Right ventricle myocardium inferior (tissue), 1 donor: ENCODE measurements at regions of chr12 and their contacts with region 1.

Region 1: DNA sequence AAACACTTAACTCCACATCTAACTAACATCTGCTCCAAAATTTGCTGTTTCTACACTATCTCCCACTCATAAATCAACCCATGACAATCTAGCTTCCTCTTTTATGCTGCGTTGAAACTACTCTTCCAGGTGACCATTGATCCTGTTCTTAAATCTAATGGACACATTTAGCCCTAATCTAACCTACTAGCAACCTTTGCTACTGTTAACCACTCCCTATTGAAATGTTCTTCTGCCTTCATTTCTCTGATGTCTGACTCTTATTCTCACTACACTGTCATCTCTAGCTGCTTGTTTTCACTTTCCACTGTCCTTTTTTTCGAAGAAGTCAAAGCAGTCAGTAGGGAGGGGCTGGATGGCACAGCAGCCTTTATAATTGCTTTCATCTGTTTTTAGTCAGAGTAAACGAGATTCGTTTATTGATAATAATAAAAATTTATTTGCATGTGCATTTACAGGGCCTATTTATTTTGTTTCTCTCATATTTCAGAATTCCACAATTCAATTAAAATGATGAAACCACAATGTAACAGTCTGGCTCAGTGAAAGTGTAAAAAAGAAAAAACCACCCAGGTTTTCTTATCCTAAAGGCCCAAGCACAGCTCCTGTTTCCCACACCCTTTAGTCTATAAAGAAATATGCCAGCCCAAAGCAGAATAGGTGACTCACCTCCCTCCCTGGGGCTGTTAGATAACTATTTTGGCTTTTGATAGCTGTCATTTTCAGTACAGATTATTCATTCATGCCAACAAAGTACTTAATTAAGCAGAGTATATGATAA is 44.9 kb downstream of the ATP2B1 start:
- DNase-seq: no peak
- ATAC-seq: no peak

Region 2: GRCh38 chr12:89678225-89678624 is 14.5 kb after region 1 on chr12:
- intact Hi-C with region 1: no loop called
- DNase-seq: no peak
- ATAC-seq: no peak

Region 3: GRCh38 chr12:89709157-89709994 is 45.6 kb after region 1 on chr12:
- intact Hi-C with region 1: loop called (anchors 5 kb)
- DNase-seq: peak; percentile 99
- ATAC-seq: peak; percentile 96